ENCODE measurements at regions of chr5 and their contacts with region 1.

Region 1: DNA sequence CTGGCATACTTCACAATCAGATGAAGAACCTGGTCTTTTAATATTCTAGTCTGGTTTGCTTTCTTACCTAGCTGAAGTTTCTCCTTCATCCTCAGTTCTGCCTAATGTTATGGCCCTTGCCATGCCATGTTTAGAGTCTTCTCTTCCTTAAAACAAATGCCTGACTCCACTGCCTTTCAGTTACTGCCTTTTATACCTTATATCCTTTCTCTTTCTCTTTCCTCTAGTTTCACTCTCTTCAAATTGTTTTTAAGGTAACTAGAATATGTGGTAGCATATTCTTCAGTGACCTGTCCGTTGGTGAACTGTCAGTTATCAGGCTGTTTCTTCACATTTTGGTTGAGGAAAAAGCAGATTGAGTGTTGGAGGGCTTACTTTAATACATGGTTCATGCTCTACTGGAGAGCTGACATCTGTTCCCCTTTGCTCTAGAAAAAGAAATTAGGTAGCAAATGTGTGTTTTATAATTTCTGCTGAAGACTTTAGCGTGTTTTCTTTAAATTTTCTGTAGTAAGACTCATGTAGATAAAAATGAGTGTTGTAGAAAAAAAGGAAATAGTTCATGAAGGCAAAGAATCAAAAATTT is 103.8 kb downstream of the DMXL1 start:
- DNase-seq: no peak
- ATAC-seq: no peak
- H3K4me3 ChIP-seq: no peak overlapping the region
- H3K27ac ChIP-seq: no peak overlapping the region
- H3K4me1 ChIP-seq: peaks cover 5% of the 10 kb centered on the region; the same call in 1 of the 2 replicates
- H3K27me3 ChIP-seq: no peaks in the 10 kb centered on the region
- CTCF ChIP-seq: no peak

Region 2: GRCh38 chr5:119218830-119219782 is 44.4 kb after region 1 on chr5:
- CTCF ChIA-PET with region 1: no interaction called
- POLR2A ChIA-PET with region 1: no interaction called
- intact Hi-C with region 1: loop called (anchors 5 kb)
- DNase-seq: peak; percentile 56
- ATAC-seq: peak; percentile 88
- H3K4me3 ChIP-seq: 0 out of 2 replicates have a peak overlapping the region, but pooled peaks have one; percentile 2
- H3K27ac ChIP-seq: no peak overlapping the region
- H3K4me1 ChIP-seq: peaks cover 8% of the 10 kb centered on the region
- H3K27me3 ChIP-seq: no peaks in the 10 kb centered on the region
- CTCF ChIP-seq: no peak